ENCODE measurements at regions of chr1 and their contacts with region 1.

Region 1: GRCh38 chr1:167304165-167304564 is 83.5 kb downstream of the POU2F1 start:
- DNase-seq: no peak
- ATAC-seq: no peak
- H3K4me3 ChIP-seq: no peak overlapping the region
- H3K4me3 Mint-ChIP-seq: no peak overlapping the region
- H3K27ac ChIP-seq: no peak overlapping the region
- H3K27ac Mint-ChIP-seq: no peak overlapping the region
- H3K4me1 ChIP-seq: peaks cover 0 to 3% of the 10 kb centered on the region in 2 experiments
- H3K4me1 Mint-ChIP-seq: peaks cover 20 to 22% (median 22%) of the 10 kb centered on the region in 3 donors
- H3K27me3 ChIP-seq: no peaks in the 10 kb centered on the region
- H3K27me3 Mint-ChIP-seq: no peaks in the 10 kb centered on the region

Region 2: DNA sequence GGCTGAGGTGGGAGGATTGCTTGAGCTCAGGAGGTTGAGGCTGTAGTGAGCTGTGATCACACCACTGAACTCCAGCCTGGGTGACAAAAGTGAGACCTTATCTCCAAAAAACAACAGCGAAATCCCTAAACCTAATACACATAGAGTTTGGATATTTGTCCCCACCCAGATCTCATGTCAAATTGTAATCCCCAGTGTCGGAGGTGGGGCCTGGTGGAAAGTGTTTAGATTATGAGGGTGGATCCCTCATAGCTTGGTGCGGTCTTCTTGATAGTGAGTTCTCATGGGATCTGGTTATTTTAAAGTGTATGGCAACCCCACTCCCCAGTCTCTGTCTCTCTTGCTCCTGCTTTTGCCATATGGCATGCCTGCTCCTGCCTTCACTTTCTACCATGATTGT is 10.5 kb after region 1 on chr1:
- CTCF ChIA-PET with region 1: no interaction called
- POLR2A ChIA-PET with region 1: no interaction called
- DNase-seq: no peak
- ATAC-seq: no peak
- H3K4me3 ChIP-seq: no peak overlapping the region
- H3K4me3 Mint-ChIP-seq: no peak overlapping the region
- H3K27ac ChIP-seq: no peak overlapping the region
- H3K27ac Mint-ChIP-seq: no peak overlapping the region
- H3K4me1 ChIP-seq: no peaks in the 10 kb centered on the region
- H3K4me1 Mint-ChIP-seq: peaks cover 4 to 24% (median 9%) of the 10 kb centered on the region in 3 donors
- H3K27me3 ChIP-seq: no peaks in the 10 kb centered on the region
- H3K27me3 Mint-ChIP-seq: no peaks in the 10 kb centered on the region

Region 3: GRCh38 chr1:167345386-167345733 is 41.2 kb after region 1 on chr1:
- CTCF ChIA-PET with region 1: no interaction called
- POLR2A ChIA-PET with region 1: interaction called in 1 of 2 experiments, 11 read pairs
- DNase-seq: no peak
- ATAC-seq: no peak
- H3K4me3 ChIP-seq: no peak overlapping the region
- H3K4me3 Mint-ChIP-seq: no peak overlapping the region
- H3K27ac ChIP-seq: no peak overlapping the region
- H3K27ac Mint-ChIP-seq: no peak overlapping the region
- H3K4me1 ChIP-seq: no peaks in the 10 kb centered on the region
- H3K4me1 Mint-ChIP-seq: peaks cover 0 to 22% (median 8%) of the 10 kb centered on the region in 3 donors
- H3K27me3 ChIP-seq: no peaks in the 10 kb centered on the region
- H3K27me3 Mint-ChIP-seq: no peaks in the 10 kb centered on the region

Measured in T-cell (primary cell).